Caco-2 (cell line): ENCODE measurements at regions of chr9 and their contacts with region 1.

Region 1: GRCh38 chr9:127224178-127224882 is 40.2 kb upstream of the GARNL3 start:
- DNase-seq: peak; percentile 96 to 97
- H3K4me3 ChIP-seq: peak overlapping the region; percentile 95
- H3K4me3 Mint-ChIP-seq: peak overlapping the region; percentile 92
- H3K27ac Mint-ChIP-seq: peak overlapping the region; percentile 92
- H3K4me1 ChIP-seq: peaks cover 6% of the 10 kb centered on the region
- H3K4me1 Mint-ChIP-seq: peaks cover 18% of the 10 kb centered on the region
- H3K27me3 ChIP-seq: no peaks in the 10 kb centered on the region
- H3K27me3 Mint-ChIP-seq: peaks cover 3% of the 10 kb centered on the region
- CTCF ChIP-seq: no peak

Region 2: GRCh38 chr9:127244609-127245601 is 20.6 kb after region 1 on chr9:
- CTCF ChIA-PET with region 1: interaction called, 8 read pairs
- POLR2A ChIA-PET with region 1: interaction called, 21 read pairs
- intact Hi-C with region 1: loop called (anchors 2 kb)
- DNase-seq: peak; percentile 97
- H3K4me3 ChIP-seq: peak overlapping the region; percentile 45
- H3K4me3 Mint-ChIP-seq: peak overlapping the region; percentile 88
- H3K27ac Mint-ChIP-seq: peak overlapping the region; percentile 89
- H3K4me1 ChIP-seq: peaks cover 5% of the 10 kb centered on the region; the same call in 1 of the 2 replicates
- H3K4me1 Mint-ChIP-seq: peaks cover 6% of the 10 kb centered on the region
- H3K27me3 ChIP-seq: no peaks in the 10 kb centered on the region
- H3K27me3 Mint-ChIP-seq: no peaks in the 10 kb centered on the region
- CTCF ChIP-seq: no peak

Region 3: DNA sequence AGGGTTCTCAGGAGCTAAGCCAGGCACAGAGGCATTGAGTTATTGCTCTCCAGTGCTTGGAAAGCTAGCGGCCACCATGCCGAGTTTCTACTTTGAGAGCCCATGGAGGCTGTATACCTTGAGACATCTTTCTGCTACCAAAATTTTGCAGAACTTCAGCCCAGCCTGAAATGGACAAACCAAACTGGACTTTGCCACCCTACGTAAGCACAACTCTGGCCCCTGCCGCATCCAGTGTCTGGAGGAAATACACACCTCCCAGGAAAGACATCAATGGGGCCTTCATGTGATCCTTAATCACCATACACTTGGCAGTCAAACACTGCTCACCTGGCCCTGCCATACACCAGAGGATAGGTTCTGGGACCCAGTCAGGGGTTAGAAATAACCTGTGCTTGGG is 68.1 kb after region 1 on chr9:
- CTCF ChIA-PET with region 1: no interaction called
- POLR2A ChIA-PET with region 1: interaction called, 10 read pairs
- intact Hi-C with region 1: no loop called
- DNase-seq: no peak
- H3K4me3 ChIP-seq: no peak overlapping the region
- H3K4me3 Mint-ChIP-seq: no peak overlapping the region
- H3K27ac Mint-ChIP-seq: no peak overlapping the region
- H3K4me1 ChIP-seq: no peaks in the 10 kb centered on the region
- H3K4me1 Mint-ChIP-seq: no peaks in the 10 kb centered on the region
- H3K27me3 ChIP-seq: no peaks in the 10 kb centered on the region
- H3K27me3 Mint-ChIP-seq: no peaks in the 10 kb centered on the region
- CTCF ChIP-seq: no peak

Region 4: DNA sequence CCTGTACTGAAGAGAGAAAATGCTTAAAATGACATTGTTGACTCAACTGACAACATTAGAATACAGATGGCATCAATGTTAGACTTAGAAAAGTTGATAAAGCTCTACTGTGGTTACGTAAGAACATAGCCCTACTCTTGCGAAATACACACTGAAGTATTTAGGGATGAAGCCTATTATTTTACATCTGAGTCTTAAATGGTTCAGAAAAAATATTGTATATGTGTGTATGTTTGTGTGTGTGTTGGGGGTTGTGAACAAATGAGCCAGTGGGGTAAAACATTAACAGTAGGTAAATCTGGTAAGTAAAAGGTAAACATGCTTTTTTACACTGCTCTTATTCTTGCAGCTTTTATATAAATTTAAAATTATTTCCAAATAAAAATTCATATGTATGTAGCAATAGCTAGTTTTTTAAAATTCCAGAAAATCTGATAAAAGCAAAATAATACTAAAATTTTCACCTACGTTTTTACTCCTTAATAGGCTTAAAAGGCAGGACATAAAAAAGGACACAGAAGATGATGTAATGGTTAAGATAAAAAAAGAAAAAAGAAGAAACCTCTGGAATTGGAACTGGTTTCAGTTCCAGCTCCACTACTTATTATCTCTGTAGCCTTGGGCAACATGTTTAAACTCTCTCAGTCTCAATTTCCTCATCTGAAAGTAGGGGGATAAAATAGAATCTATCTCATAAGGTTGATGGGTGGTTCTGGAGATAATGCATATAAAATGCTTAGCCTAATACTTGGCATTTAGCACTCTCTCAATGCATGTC is 84.5 kb after region 1 on chr9:
- CTCF ChIA-PET with region 1: no interaction called
- POLR2A ChIA-PET with region 1: interaction called, 10 read pairs
- intact Hi-C with region 1: no loop called
- DNase-seq: peak in 1 of 2 experiments; percentile 31
- H3K4me3 ChIP-seq: no peak overlapping the region
- H3K4me3 Mint-ChIP-seq: peak overlapping the region; percentile 23
- H3K27ac Mint-ChIP-seq: peak overlapping the region; percentile 54
- H3K4me1 ChIP-seq: peaks cover 22% of the 10 kb centered on the region
- H3K4me1 Mint-ChIP-seq: peaks cover 21% of the 10 kb centered on the region
- H3K27me3 ChIP-seq: no peaks in the 10 kb centered on the region
- H3K27me3 Mint-ChIP-seq: no peaks in the 10 kb centered on the region
- CTCF ChIP-seq: no peak

Region 5: GRCh38 chr9:127314911-127315310 is 90.6 kb after region 1 on chr9:
- CTCF ChIA-PET with region 1: interaction called, 3 read pairs
- POLR2A ChIA-PET with region 1: interaction called, 12 read pairs
- intact Hi-C with region 1: no loop called
- DNase-seq: no peak
- H3K4me3 ChIP-seq: no peak overlapping the region
- H3K4me3 Mint-ChIP-seq: no peak overlapping the region
- H3K27ac Mint-ChIP-seq: no peak overlapping the region
- H3K4me1 ChIP-seq: no peaks in the 10 kb centered on the region
- H3K4me1 Mint-ChIP-seq: peaks cover under 1% of the 10 kb centered on the region
- H3K27me3 ChIP-seq: no peaks in the 10 kb centered on the region
- H3K27me3 Mint-ChIP-seq: no peaks in the 10 kb centered on the region
- CTCF ChIP-seq: no peak